Breast epithelium (tissue), 4 donors: ENCODE measurements at regions of chr7 and their contacts with region 1.

Region 1: GRCh38 chr7:54738737-54739136 is 20.3 kb downstream of the SEC61G start:
- DNase-seq: no peak
- H3K4me3 ChIP-seq: no peak overlapping the region
- H3K27ac ChIP-seq: no peak overlapping the region
- H3K4me1 ChIP-seq: no peaks in the 10 kb centered on the region
- H3K27me3 ChIP-seq: no peaks in the 10 kb centered on the region
- CTCF ChIP-seq: no peak
- POLR2A ChIP-seq: no peak

Region 2: DNA sequence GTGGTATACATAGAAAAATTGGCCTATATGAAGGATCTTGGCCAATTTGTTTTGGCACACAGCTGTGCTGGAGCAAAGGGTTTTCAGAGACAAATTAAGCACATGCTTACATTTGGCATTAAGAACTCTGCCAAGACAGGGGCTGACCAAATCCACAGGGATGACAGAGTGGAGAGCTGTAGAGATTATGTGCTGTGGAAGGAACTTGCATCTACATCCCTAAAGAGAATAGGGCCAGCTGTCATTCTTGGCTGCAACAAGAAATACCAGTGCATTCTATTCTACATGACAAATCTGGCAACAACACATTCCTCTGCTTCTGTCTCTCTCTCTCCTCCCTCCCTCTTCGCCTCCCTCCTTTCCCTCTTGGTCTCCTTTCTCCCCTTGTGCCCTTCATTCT is 1627.7 kb before region 1 on chr7:
- intact Hi-C with region 1: no loop called
- DNase-seq: no peak
- H3K4me3 ChIP-seq: no peak overlapping the region
- H3K27ac ChIP-seq: no peak overlapping the region
- H3K4me1 ChIP-seq: no peaks in the 10 kb centered on the region
- H3K27me3 ChIP-seq: no peaks in the 10 kb centered on the region
- CTCF ChIP-seq: no peak
- POLR2A ChIP-seq: no peak

Region 3: GRCh38 chr7:54758702-54759592 is 20.2 kb after region 1 on chr7 and contains the start of gene SEC61G:
- intact Hi-C with region 1: no loop called
- DNase-seq: peak; percentile 96 to 97
- H3K4me3 ChIP-seq: peak within 1 kb of the TSS; percentile 89 to 100 (median 98)
- H3K27ac ChIP-seq: peak within 1 kb of the TSS; percentile 90 to 93
- H3K4me1 ChIP-seq: peaks cover 0 to 10% of the 10 kb centered on the region in 2 donors
- H3K27me3 ChIP-seq: no peaks in the 10 kb centered on the region
- CTCF ChIP-seq: peak in 1 of 3 donors; percentile 21
- POLR2A ChIP-seq: peak; percentile 94
- total RNA-seq, gene SEC61G: 192 to 238 (median 194) TPM

Region 4: DNA sequence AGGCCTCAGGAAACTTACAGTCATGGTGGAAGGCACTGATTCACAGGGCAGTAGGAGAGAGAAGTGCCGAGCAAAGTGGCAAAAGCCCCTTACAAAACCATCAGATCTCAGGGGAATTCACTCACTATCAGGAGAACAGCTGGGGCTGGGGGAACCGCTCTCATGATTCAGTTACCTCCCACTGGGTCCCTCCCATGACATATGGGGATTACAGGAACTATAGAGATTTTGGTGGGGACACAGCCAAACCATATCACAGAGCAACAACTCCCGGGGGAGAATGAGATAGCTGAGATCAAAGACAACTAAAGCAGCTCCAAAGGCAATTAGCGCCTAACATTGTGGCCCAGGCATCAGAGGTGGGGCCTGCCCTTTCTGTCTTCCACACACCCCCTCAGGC is 918.9 kb after region 1 on chr7:
- intact Hi-C with region 1: loop called (anchors 5 kb)
- DNase-seq: no peak
- H3K4me3 ChIP-seq: no peak overlapping the region
- H3K27ac ChIP-seq: no peak overlapping the region
- H3K4me1 ChIP-seq: no peaks in the 10 kb centered on the region
- H3K27me3 ChIP-seq: no peaks in the 10 kb centered on the region
- CTCF ChIP-seq: no peak
- POLR2A ChIP-seq: no peak